ENCODE measurements at regions of chr3 and their contacts with region 1.

Region 1: DNA sequence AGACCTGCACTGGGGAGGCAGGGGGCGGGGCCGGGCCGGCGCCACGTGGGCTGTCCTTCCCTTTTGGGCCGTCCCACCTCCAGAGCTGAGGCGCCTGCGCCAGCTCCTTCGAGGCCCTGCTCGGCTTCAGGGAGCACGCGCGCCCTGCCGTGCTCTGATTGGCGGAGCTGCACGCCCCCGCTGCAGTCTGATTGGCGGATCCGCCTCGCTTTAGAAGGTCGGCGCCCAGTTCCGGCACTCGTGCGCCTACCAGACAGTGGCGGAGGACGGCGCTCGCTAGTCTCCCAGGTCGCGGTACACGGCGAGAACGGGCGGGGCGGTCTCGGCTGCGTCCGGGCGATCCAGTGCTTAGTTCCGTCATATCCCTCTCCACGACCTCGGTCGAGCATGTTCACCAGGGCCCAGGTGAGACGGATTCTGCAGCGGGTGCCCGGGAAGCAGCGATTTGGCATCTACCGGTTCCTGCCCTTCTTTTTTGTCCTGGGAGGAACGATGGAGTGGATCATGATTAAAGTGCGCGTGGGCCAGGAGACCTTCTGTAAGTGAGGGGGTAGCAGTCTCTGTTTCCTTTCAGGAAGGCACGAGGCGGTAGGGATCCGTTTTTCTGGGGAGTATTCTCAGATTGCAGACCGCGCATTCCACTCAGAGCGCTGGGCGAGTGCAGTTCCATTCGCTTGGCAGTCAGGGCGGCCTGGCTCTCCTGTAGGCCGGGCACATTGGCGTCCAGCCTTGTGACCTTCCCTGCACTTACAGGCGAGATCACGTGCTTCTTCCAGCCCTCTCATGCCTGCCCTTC is at the start of gene UQCC5:
- DNase-seq: peak; percentile 97 to 98 (median 97)
- H3K4me3 ChIP-seq: peak within 1 kb of the TSS; percentile 60 to 85 (median 61)
- H3K4me3 Mint-ChIP-seq: peak within 1 kb of the TSS; percentile 98
- H3K27ac ChIP-seq: peak within 1 kb of the TSS; percentile 79 to 86
- H3K27ac Mint-ChIP-seq: peak within 1 kb of the TSS; percentile 93 to 99 (median 98)
- H3K4me1 ChIP-seq: peaks cover 60 to 76% of the 10 kb centered on the region in 2 donors
- H3K4me1 Mint-ChIP-seq: peaks cover 58% of the 10 kb centered on the region
- H3K27me3 ChIP-seq: peaks cover 0 to 4% of the 10 kb centered on the region in 2 donors
- H3K27me3 Mint-ChIP-seq: peaks cover 4 to 17% (median 15%) of the 10 kb centered on the region in 3 donors
- CTCF ChIP-seq: no peak
- polyA plus RNA-seq, gene UQCC5: 1.4 to 52.1 (median 43.3) TPM

Region 2: GRCh38 chr3:51384726-51385473 is 1151.7 kb before region 1 on chr3 and contains the start of gene MANF:
- intact Hi-C with region 1: loop called in 1 of 2 experiments (anchors 10 kb)
- DNase-seq: peak; percentile 98
- H3K4me3 ChIP-seq: peak within 1 kb of the TSS; percentile 78 to 99 (median 83)
- H3K4me3 Mint-ChIP-seq: peak within 1 kb of the TSS; percentile 96 to 98
- H3K27ac ChIP-seq: peak within 1 kb of the TSS; percentile 64 to 97
- H3K27ac Mint-ChIP-seq: peak within 1 kb of the TSS; percentile 96 to 99 (median 97)
- H3K4me1 ChIP-seq: peaks cover 34 to 44% of the 10 kb centered on the region in 2 donors
- H3K4me1 Mint-ChIP-seq: peaks cover 38% of the 10 kb centered on the region
- H3K27me3 ChIP-seq: no peaks in the 10 kb centered on the region
- H3K27me3 Mint-ChIP-seq: peaks cover 0 to 3% (median 1%) of the 10 kb centered on the region in 3 donors
- CTCF ChIP-seq: no peak
- polyA plus RNA-seq, gene MANF: 14.1 to 30.2 (median 23.6) TPM

Region 3: DNA sequence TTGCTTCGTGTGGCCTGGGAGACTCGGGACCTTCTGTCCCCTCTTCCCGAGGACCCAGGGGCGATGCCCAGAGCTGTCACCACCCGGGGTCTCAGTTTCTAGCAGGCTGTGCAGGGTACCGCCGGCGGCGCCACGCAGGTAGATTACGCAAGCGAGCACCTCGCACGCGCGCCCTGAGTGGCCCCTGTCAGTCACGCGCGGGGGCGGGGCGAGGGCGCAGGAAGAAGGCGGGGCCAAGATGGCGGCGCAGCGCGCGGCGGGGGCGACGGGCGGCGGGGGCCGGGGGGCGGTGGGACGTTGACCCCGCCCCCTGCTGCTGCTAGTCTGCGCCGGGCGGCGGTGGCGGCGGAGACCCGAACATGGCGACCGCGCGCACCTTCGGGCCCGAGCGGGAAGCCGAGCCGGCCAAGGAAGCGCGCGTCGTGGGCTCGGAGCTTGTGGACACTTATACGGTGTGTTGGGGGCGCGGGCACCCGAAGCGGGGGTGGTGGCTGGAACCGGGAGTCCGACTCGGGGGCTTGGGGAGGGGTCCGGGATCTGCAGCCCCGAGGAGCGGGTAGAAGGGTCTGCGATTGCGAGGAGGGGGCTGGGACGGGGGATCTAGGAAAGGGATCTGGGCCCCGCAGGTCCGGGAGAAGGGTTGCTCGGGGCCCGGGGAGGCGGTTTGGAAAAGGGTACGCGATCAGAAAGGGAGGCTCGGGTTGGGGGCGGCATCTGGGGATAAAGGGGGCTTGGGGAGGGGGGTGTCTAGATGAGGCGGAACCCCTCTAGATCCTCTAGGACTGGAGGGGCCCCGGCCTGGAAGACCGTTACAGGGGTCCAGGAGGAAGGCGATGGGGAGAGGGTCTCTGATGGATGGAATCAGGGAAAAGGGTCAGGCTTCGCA is 81.0 kb before region 1 on chr3 and contains the start of gene NISCH:
- intact Hi-C with region 1: loop called in 1 of 2 experiments (anchors 5 kb)
- DNase-seq: peak; percentile 80 to 83 (median 81)
- H3K4me3 ChIP-seq: peak within 1 kb of the TSS; percentile 81 to 91 (median 89)
- H3K4me3 Mint-ChIP-seq: peak within 1 kb of the TSS; percentile 90 to 92
- H3K27ac ChIP-seq: peak within 1 kb of the TSS; percentile 57 to 94
- H3K27ac Mint-ChIP-seq: peak within 1 kb of the TSS; percentile 80 to 94 (median 92)
- H3K4me1 ChIP-seq: peaks cover 27 to 31% of the 10 kb centered on the region in 2 donors
- H3K4me1 Mint-ChIP-seq: peaks cover 33% of the 10 kb centered on the region
- H3K27me3 ChIP-seq: no peaks in the 10 kb centered on the region
- H3K27me3 Mint-ChIP-seq: peaks cover 0 to 3% (median 2%) of the 10 kb centered on the region in 3 donors
- CTCF ChIP-seq: no peak
- polyA plus RNA-seq, gene NISCH: 9.7 to 106 (median 13.1) TPM

Region 4: DNA sequence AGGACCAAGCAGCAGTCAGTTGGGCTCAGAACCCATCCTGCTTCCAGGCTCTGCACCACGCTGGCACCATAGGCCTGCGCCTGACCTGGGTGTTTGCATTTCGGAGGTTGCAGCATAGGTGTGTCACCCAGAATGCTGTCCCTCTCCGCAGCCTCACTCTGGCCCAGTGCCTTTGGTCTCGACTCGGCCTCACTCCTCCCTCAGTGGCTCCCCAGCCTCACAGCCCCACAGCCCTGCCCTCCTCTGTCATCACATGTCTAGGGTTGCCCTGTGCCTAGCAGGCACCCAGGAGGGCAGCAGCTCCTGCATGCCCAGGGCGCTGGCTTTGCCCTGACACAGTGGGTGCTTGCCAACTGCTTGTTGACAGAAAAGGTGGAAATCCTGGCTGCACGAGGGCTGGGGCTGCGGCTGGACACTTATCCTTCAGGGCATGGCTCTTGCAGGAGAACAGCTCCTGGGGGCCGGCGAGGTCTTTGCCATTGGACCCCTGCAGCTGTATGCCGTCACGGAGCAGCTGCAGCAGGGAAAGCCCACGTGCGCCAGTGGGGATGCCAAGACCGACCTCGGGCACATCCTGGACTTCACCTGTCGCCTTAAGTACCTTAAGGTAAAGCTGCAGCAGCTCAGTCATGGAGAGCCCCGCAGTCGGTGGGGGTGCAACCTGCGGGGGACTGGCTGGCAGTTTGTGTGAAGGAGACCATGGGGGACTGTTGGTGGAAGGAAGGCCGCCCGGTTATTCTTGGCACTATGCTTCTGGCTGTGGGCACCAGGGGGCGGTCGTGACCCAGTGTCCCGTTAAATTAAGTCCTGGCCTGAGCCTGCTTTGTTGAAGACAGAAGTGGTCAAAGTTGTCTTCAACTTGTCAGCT is 65.0 kb before region 1 on chr3:
- intact Hi-C with region 1: loop called (anchors 1 to 5 kb)
- DNase-seq: peak; percentile 57 to 74 (median 67)
- H3K4me3 ChIP-seq: no peak overlapping the region
- H3K4me3 Mint-ChIP-seq: peak overlapping the region in 1 of 2 donors; percentile 39
- H3K27ac ChIP-seq: no peak overlapping the region
- H3K27ac Mint-ChIP-seq: peak overlapping the region in 4 of 7 donors; percentile 59 to 76 (median 66)
- H3K4me1 ChIP-seq: peaks cover 52 to 55% of the 10 kb centered on the region in 2 donors
- H3K4me1 Mint-ChIP-seq: peaks cover 56% of the 10 kb centered on the region
- H3K27me3 ChIP-seq: no peaks in the 10 kb centered on the region
- H3K27me3 Mint-ChIP-seq: peaks cover 0 to 2% (median 0%) of the 10 kb centered on the region in 3 donors
- CTCF ChIP-seq: peak; percentile 84

Region 5: DNA sequence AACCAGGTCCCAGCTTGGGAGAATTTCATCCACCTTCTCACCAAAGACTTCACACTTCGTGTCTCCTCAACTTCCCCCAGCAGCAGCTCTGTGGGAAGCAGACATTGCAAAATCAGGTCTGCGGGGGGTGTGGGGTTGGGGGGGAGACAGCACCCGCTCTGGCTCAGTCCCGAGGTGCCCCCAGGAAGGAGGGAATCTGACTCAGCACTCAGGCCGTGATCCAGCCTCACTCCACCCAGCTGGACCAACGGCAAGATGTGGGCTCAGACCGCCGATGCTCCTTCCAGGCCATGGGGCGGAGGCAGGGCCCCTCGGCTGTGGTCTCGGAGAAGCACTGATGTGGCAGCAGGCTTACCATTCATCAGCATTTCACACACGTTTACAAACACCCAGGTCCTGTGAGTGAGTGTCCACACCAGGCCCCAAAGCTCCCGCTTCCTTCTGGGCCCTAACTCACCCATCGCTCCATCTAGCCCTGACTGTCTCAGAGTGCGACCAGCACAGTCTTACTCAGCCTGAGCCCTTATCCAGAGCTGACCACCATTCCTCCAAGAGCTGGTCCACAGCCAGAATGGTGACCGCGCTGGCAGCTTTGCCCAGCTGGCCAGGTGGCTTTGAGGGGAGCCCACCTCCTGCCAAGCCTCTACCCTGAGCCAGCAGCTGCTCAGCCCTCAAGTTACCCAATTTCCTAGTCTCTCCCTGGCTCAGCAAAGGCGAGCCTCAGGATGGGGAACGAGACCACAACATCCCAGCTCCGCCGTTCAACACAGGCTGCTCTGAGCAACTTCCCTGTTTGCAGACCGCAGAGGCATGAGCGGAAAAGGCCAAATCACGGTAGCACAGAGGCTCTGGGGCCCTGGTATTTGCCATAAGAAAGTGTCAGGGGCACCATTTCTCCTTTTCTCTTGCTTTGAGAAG is 38.2 kb before region 1 on chr3:
- intact Hi-C with region 1: loop called in 1 of 2 experiments (anchors 5 kb)
- DNase-seq: peak; percentile 88 to 96 (median 92)
- H3K4me3 ChIP-seq: peak overlapping the region in 1 of 3 experiments; percentile 81
- H3K4me3 Mint-ChIP-seq: peak overlapping the region; percentile 63 to 72
- H3K27ac ChIP-seq: peak overlapping the region; percentile 71 to 94
- H3K27ac Mint-ChIP-seq: peak overlapping the region; percentile 91 to 95 (median 94)
- H3K4me1 ChIP-seq: peaks cover 79% of the 10 kb centered on the region in 2 donors
- H3K4me1 Mint-ChIP-seq: peaks cover 70% of the 10 kb centered on the region
- H3K27me3 ChIP-seq: no peaks in the 10 kb centered on the region
- H3K27me3 Mint-ChIP-seq: peaks cover 0 to 1% (median 0%) of the 10 kb centered on the region in 3 donors
- CTCF ChIP-seq: no peak

Region 6: DNA sequence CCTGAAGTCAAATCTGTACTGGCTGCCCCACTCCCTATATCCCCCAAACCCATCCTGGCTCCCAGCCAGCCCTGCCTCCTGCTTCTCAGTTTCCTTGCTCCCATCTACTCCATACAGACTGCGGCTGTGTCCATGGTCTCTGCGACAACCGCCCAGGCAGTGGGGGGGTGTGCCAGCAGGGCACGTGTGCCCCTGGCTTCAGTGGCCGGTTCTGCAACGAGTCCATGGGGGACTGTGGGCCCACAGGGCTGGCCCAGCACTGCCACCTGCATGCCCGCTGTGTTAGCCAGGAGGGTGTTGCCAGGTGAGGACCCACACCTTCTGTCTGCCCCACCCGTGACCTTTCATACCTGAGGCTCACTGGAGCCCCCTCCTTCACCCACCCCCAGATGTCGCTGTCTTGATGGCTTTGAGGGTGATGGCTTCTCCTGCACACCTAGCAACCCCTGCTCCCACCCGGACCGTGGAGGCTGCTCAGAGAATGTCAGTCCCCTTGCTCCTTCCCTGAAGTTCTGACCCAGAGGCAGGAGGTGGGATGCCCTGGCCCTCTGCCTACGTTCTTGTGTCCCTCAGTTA is 26.7 kb before region 1 on chr3:
- intact Hi-C with region 1: no loop called
- DNase-seq: no peak
- H3K4me3 ChIP-seq: no peak overlapping the region
- H3K4me3 Mint-ChIP-seq: no peak overlapping the region
- H3K27ac ChIP-seq: no peak overlapping the region
- H3K27ac Mint-ChIP-seq: peak overlapping the region in 1 of 7 donors; percentile 14
- H3K4me1 ChIP-seq: no peaks in the 10 kb centered on the region
- H3K4me1 Mint-ChIP-seq: no peaks in the 10 kb centered on the region
- H3K27me3 ChIP-seq: no peaks in the 10 kb centered on the region
- H3K27me3 Mint-ChIP-seq: peaks cover 0 to 2% (median 1%) of the 10 kb centered on the region in 3 donors
- CTCF ChIP-seq: no peak

Region 7: DNA sequence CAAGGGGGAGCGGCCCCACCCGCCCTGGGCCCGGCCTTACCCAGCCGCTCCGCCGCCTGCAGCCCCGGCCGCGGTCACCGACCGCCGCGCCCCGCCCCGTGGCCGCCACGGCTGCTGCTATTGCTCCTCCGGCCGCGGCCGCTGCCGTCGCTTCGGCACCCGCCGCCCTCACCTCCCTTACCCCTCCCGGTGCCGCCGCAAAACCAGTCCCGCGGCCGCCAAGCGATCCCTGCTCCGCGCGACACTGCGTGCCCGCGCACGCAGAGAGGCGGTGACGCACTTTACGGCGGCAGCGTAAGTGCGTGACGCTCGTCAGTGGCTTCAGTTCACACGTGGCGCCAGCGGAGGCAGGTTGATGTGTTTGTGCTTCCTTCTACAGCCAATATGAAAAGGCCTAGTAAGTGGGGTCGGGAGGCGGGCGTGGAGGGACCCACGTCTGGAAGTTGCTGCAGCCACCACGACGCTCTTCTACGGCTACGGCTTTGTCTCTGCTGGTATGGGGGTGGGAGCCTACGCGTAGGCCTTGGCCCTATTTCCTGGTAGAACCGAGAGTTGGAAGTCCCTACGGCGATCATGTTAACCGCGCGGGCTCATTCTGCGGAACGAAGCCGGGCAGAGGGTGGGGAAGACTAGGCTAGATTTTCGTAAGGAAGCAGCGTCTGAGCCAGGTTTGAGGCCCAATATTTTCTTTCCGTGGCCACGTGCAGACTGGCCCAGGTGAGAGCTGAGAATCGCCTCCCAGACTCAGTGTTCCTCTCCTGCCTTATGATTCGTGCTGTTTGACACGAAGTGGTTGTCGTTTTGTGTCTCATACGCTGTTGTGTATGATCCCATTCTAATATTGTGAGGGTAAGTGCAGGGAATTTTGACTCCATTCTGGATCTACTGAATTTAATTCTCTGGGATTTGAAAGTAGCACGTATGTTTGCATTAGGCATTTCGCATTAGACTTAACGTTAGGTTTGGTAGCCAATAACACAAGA is 149.4 kb after region 1 on chr3 and contains the starts of genes GNL3 and PBRM1:
- intact Hi-C with region 1: loop called in 1 of 2 experiments (anchors 10 kb)
- DNase-seq: peak; percentile 89 to 94 (median 92)
- H3K4me3 ChIP-seq: peak within 1 kb of the TSS; percentile 82 to 92 (median 89)
- H3K4me3 Mint-ChIP-seq: peak within 1 kb of the TSS; percentile 91 to 96
- H3K27ac ChIP-seq: peak within 1 kb of the TSS; percentile 78 to 89
- H3K27ac Mint-ChIP-seq: peak within 1 kb of the TSS; percentile 95 to 98 (median 97)
- H3K4me1 ChIP-seq: peaks cover 46 to 53% of the 10 kb centered on the region in 2 donors
- H3K4me1 Mint-ChIP-seq: peaks cover 43% of the 10 kb centered on the region
- H3K27me3 ChIP-seq: no peaks in the 10 kb centered on the region
- H3K27me3 Mint-ChIP-seq: no peaks in the 10 kb centered on the region
- CTCF ChIP-seq: no peak
- polyA plus RNA-seq, gene GNL3: 13.4 to 18.7 (median 16.7) TPM
- polyA plus RNA-seq, gene PBRM1: 26.1 to 72.9 (median 38.0) TPM